Adrenal gland (tissue), 19 donors: ENCODE measurements at regions of chr1 and their contacts with region 1.

Region 1: DNA sequence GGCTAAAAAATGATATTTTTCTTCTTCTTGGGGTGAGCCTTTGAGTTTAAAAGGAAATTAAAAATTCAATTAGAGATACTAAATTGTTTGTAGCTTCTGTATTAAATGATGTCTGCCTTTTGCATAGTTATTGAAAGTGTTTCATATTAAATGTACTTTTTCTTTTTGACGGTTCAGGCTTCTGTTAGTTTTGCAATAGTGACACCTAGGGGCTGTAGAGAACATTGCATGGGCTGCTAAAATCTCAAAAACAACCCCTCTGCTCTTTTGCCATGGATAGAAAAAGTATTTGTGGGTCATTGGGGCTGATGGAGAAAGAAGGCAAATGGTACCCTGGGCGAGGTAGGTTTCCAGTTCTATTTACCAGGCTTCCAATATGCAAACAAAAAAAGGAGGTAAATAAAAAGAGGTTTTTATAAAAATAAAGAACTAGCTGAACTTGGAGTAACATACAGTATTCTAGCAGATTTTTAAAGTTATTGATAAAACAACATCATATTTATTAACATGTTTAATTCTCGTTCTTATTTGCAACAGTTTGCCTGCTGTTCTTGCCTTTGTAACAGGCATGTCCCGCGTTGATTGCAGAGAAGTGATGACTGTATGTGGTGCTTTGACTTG is 115.4 kb upstream of the HOOK1 start:
- DNase-seq: peak in 2 of 7 donors; percentile 33 to 44
- H3K4me3 ChIP-seq: no peak overlapping the region
- H3K27ac ChIP-seq: no peak overlapping the region
- H3K4me1 ChIP-seq: peaks cover 20 to 39% of the 10 kb centered on the region in 2 donors
- H3K27me3 ChIP-seq: no peaks in the 10 kb centered on the region
- CTCF ChIP-seq: peak; percentile 88 to 96 (median 91)
- POLR2A ChIP-seq: no peak

Region 2: GRCh38 chr1:58773406-58773840 is 925.9 kb before region 1 on chr1:
- intact Hi-C with region 1: loop called in 1 of 2 experiments (anchors 10 kb)
- DNase-seq: peak in 4 of 7 donors; percentile 13 to 69 (median 26)
- H3K4me3 ChIP-seq: no peak overlapping the region
- H3K27ac ChIP-seq: peak overlapping the region in 1 of 5 donors; percentile 0
- H3K4me1 ChIP-seq: no peaks in the 10 kb centered on the region
- H3K27me3 ChIP-seq: no peaks in the 10 kb centered on the region
- CTCF ChIP-seq: no peak
- POLR2A ChIP-seq: no peak

Region 3: GRCh38 chr1:59296358-59297256 is 402.7 kb before region 1 on chr1 and contains the start of gene FGGY:
- intact Hi-C with region 1: loop called (anchors 5 to 10 kb)
- DNase-seq: peak; percentile 96 to 99 (median 99)
- H3K4me3 ChIP-seq: peak within 1 kb of the TSS in 3 of 4 donors; percentile 50 to 66 (median 59)
- H3K27ac ChIP-seq: peak within 1 kb of the TSS; percentile 80 to 98 (median 93)
- H3K4me1 ChIP-seq: peaks cover 22 to 44% of the 10 kb centered on the region in 2 donors
- H3K27me3 ChIP-seq: no peaks in the 10 kb centered on the region
- CTCF ChIP-seq: peak in 2 of 6 experiments; percentile 10 to 12
- POLR2A ChIP-seq: peak; percentile 89 to 94
- total RNA-seq, gene FGGY: 26.1 to 75.5 (median 38.4) TPM

Region 4: DNA sequence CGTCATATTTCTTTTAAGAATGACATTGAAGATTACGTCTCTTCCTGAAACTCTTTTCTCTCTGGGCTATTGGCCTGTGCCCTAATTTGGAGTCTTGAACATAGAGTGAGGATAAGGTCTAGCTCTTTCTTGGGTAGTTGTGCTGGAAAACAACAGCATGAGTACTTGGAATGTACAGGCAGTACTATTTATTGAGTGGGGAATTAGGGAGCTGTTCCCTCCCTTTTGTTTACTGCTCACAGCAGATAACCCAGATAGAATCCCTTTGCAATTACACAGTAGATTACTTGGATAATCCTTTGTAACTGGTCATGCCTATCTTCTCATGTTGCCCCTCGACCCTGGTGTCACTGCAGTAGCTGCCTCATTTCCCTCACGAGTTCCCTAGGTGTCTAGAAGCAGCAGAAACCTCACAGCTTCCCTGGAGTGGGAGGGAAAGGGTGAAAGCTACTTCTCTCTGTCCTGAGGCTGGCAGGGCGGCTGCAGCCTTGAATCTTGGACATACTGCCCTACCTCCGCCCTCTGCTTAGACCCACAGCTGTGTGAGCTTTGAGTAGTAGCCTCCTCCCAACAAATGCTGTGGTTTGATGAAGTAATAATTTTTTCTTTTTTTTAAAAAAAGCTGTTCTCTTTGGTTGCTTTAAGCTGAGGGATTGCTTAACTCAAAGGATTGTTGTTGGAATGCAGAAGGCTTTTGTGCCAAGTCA is 331.9 kb before region 1 on chr1:
- intact Hi-C with region 1: loop called in 1 of 2 experiments (anchors 10 kb)
- DNase-seq: peak; percentile 66 to 92 (median 90)
- H3K4me3 ChIP-seq: no peak overlapping the region
- H3K27ac ChIP-seq: peak overlapping the region; percentile 27 to 86 (median 75)
- H3K4me1 ChIP-seq: peaks cover 24 to 28% of the 10 kb centered on the region in 2 donors
- H3K27me3 ChIP-seq: no peaks in the 10 kb centered on the region
- CTCF ChIP-seq: no peak
- POLR2A ChIP-seq: peak in 1 of 2 donors; percentile 56